Activated B cell treated with CpG ODN at 0.5 μM for 24 hours (primary cell): ENCODE measurements at regions of chr4 and their contacts with region 1.

Region 1: GRCh38 chr4:184263910-184264732 is 46.4 kb upstream of the ENPP6 start:
- DNase-seq: peak; percentile 80
- ATAC-seq: peak; percentile 20
- H3K4me3 Mint-ChIP-seq: peak overlapping the region; percentile 25
- H3K27ac Mint-ChIP-seq: peak overlapping the region; percentile 60
- H3K4me1 Mint-ChIP-seq: peaks cover 48% of the 10 kb centered on the region
- H3K27me3 Mint-ChIP-seq: no peaks in the 10 kb centered on the region
- CTCF ChIP-seq: peak; percentile 71

Region 2: GRCh38 chr4:184232206-184232820 is 31.8 kb before region 1 on chr4:
- CTCF ChIA-PET with region 1: no interaction called
- POLR2A ChIA-PET with region 1: no interaction called
- intact Hi-C with region 1: no loop called
- DNase-seq: no peak
- ATAC-seq: no peak
- H3K4me3 Mint-ChIP-seq: no peak overlapping the region
- H3K27ac Mint-ChIP-seq: no peak overlapping the region
- H3K4me1 Mint-ChIP-seq: peaks cover 9% of the 10 kb centered on the region
- H3K27me3 Mint-ChIP-seq: peaks cover 35% of the 10 kb centered on the region
- CTCF ChIP-seq: no peak

Region 3: DNA sequence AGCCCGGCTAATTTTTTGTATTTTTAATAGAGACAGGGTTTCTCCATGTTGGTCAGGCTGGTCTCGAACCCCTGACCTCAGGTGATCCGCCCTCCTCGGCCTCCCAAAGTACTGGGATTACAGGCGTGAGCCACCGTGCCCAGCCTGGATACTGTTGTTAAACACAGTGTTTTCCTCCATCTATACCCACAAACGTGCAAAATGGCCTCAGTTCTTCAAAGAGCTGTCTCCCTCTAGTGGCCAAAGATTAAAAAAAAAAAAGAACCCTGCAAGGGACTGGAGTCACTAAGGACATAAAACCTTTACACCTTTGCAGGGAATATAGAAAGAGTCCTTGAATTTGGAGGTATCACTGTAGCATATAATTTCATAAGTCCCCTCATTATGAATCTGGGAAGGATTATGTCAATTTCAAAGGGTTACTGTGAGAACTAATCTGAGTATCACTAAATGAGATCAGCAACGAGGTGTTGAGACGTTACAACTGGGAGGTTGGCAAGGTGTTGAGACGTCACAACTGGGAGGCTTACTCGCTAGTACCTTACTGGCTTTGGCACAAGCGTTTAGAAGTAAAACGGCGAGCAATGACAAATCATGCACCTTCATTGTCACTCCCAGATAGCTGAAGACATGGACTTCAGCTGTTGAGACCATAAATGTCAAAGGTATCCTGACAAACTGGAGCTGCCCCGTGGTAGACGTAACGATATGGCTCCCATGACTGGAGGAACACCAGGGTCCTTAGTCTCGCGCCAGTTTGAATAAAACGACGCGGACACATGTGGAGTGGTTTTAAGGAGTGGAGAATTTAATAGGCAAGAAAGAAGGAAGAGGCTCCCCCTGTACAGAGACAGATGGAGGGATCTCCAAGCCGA is 13.1 kb before region 1 on chr4:
- CTCF ChIA-PET with region 1: interaction called, 13 read pairs
- POLR2A ChIA-PET with region 1: interaction called, 4 read pairs
- intact Hi-C with region 1: no loop called
- DNase-seq: no peak
- ATAC-seq: peak; percentile 61
- H3K4me3 Mint-ChIP-seq: no peak overlapping the region
- H3K27ac Mint-ChIP-seq: no peak overlapping the region
- H3K4me1 Mint-ChIP-seq: peaks cover 4% of the 10 kb centered on the region
- H3K27me3 Mint-ChIP-seq: peaks cover 5% of the 10 kb centered on the region
- CTCF ChIP-seq: no peak

Region 4: GRCh38 chr4:184318852-184319251 is 54.7 kb after region 1 on chr4:
- CTCF ChIA-PET with region 1: interaction called, 7 read pairs
- POLR2A ChIA-PET with region 1: interaction called, 47 read pairs
- intact Hi-C with region 1: loop called (anchors 1 kb)
- DNase-seq: no peak
- ATAC-seq: no peak
- H3K4me3 Mint-ChIP-seq: peak overlapping the region; percentile 24
- H3K27ac Mint-ChIP-seq: peak overlapping the region; percentile 98
- H3K4me1 Mint-ChIP-seq: peaks cover 73% of the 10 kb centered on the region
- H3K27me3 Mint-ChIP-seq: no peaks in the 10 kb centered on the region
- CTCF ChIP-seq: no peak

Region 5: GRCh38 chr4:184417802-184418511 is 153.8 kb after region 1 on chr4:
- CTCF ChIA-PET with region 1: interaction called, 11 read pairs
- POLR2A ChIA-PET with region 1: interaction called, 14 read pairs
- intact Hi-C with region 1: loop called (anchors 1 kb)
- DNase-seq: no peak
- ATAC-seq: peak; percentile 65
- H3K4me3 Mint-ChIP-seq: peak overlapping the region; percentile 55
- H3K27ac Mint-ChIP-seq: peak overlapping the region; percentile 89
- H3K4me1 Mint-ChIP-seq: peaks cover 81% of the 10 kb centered on the region
- H3K27me3 Mint-ChIP-seq: no peaks in the 10 kb centered on the region
- CTCF ChIP-seq: no peak

Region 6: DNA sequence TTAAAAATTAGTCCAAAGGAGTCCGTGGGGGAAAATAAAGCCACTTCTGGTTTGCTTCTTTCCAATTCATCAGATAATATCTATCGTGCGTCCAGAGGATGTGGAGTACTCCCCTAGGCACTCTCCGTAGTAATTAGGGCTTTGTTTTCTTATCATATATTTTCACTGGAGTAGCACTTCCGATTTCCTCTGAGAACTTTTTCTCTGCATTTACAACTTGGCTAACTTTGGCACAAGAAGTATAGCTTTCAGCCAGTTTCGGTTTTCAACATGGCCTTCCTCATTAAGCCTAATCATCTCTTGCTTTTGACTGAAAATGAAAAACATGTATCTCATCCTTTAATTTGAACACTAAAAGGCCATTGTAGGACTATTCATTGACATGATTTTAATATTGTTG is 304.6 kb after region 1 on chr4:
- CTCF ChIA-PET with region 1: no interaction called
- POLR2A ChIA-PET with region 1: no interaction called
- intact Hi-C with region 1: no loop called
- DNase-seq: no peak
- ATAC-seq: no peak
- H3K4me3 Mint-ChIP-seq: no peak overlapping the region
- H3K27ac Mint-ChIP-seq: no peak overlapping the region
- H3K4me1 Mint-ChIP-seq: peaks cover 11% of the 10 kb centered on the region
- H3K27me3 Mint-ChIP-seq: no peaks in the 10 kb centered on the region
- CTCF ChIP-seq: no peak

Region 7: DNA sequence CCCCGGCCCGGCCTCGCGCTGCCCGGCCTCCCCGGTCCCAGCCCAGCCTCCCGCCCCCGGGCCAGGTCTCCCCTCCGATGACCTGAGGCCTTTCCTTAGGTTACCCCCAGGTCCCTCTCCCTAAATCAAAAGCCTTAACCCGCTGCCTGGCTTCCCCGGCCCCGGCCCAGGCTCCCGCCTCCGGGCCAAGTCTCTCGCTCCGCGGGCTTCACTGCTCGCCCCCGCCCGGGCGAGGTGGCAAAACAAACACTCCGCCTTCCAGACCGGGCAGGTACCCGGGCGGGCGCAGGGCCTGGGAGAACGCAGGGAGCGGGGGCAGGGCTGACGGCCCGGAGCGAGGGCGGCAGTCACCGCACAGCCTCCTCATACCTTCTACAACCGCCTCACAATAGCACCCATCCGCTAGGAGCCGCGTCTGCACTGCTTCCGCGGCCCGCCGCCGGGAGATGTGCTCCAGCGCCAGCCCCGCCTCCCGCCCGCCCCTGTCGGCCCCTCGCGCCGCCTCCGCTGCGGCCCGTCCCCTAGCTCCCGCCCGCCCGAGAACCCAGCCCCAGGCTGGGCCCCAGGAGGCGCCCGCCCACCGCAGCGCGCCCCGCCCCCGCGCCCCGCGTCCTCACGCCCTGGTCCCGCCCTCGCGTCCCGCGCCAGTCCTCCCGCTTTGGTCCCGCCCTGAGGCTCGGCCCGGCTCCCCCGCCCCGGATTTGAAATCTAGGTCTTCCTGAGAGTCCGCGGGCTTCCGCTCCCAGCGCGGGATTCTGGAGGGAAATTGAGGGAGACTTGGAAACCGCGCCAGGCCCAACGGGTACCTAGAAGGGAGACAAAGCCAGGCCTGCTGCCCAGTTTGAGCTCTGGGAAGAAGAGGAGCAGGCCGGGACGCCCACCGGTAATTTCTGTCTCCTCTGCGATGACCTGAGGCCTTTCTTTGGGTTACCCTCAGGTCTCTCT is 385.2 kb after region 1 on chr4 and contains the starts of genes CASP3 and PRIMPOL:
- CTCF ChIA-PET with region 1: interaction called, 13 read pairs
- POLR2A ChIA-PET with region 1: interaction called, 18 read pairs
- intact Hi-C with region 1: loop called (anchors 1 kb)
- DNase-seq: peak; percentile 98
- ATAC-seq: peak; percentile 92
- H3K4me3 Mint-ChIP-seq: peak within 1 kb of the TSS; percentile 94
- H3K27ac Mint-ChIP-seq: peak within 1 kb of the TSS; percentile 89
- H3K4me1 Mint-ChIP-seq: peaks cover 43% of the 10 kb centered on the region
- H3K27me3 Mint-ChIP-seq: no peaks in the 10 kb centered on the region
- CTCF ChIP-seq: no peak
- total RNA-seq, gene CASP3: 24.0 and 24.9 TPM in 2 replicates
- total RNA-seq, gene PRIMPOL: 9.1 and 11.6 TPM in 2 replicates

Region 8: GRCh38 chr4:184825896-184826690 is 562.0 kb after region 1 on chr4 and contains the start of gene ACSL1:
- CTCF ChIA-PET with region 1: interaction called, 6 read pairs
- POLR2A ChIA-PET with region 1: interaction called, 3 read pairs
- intact Hi-C with region 1: loop called (anchors 1 kb)
- DNase-seq: peak; percentile 77
- ATAC-seq: peak; percentile 78
- H3K4me3 Mint-ChIP-seq: peak within 1 kb of the TSS; percentile 94
- H3K27ac Mint-ChIP-seq: peak within 1 kb of the TSS; percentile 91
- H3K4me1 Mint-ChIP-seq: peaks cover 42% of the 10 kb centered on the region
- H3K27me3 Mint-ChIP-seq: no peaks in the 10 kb centered on the region
- CTCF ChIP-seq: no peak
- total RNA-seq, gene ACSL1: 46.3 and 47.0 TPM in 2 replicates

Region 9: DNA sequence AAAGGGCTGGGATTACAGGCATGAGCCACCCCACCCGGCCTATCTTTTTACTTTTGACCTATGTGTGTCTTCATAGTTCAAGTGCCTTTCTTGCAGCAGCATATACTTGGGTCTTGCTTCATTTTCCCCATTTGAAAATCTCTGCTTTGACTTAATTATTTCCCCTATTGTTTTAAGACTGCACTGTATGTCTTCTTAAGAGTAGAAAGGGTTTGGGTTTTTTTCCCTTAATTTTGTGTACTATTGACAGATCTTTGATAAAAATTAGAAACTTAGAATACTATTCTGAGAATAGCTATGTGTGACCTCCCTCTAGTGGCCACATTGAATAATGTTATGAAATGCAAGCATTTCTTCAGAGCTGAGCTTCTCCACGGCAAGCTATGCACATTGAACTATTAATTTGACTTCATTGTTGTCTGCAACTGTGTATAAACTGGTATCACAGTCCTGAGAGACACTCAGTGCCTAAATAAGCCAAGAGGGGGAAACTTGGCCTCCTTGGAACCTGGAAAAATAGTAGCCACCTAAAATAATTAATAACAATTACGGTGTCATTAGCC is 870.3 kb after region 1 on chr4:
- CTCF ChIA-PET with region 1: interaction called, 3 read pairs
- POLR2A ChIA-PET with region 1: no interaction called
- intact Hi-C with region 1: loop called (anchors 10 kb)
- DNase-seq: no peak
- ATAC-seq: peak; percentile 56
- H3K4me3 Mint-ChIP-seq: no peak overlapping the region
- H3K27ac Mint-ChIP-seq: no peak overlapping the region
- H3K4me1 Mint-ChIP-seq: no peaks in the 10 kb centered on the region
- H3K27me3 Mint-ChIP-seq: peaks cover 9% of the 10 kb centered on the region
- CTCF ChIP-seq: no peak